Activated naive CD4-positive, alpha-beta T cell treated with anti-CD3 and anti-CD28 coated beads for 36 hours (primary cell): ENCODE measurements at regions of chr10 and their contacts with region 1.

Region 1: GRCh38 chr10:110671788-110672579 is 27.8 kb downstream of the RBM20 start:
- DNase-seq: peak; percentile 76
- H3K4me3 Mint-ChIP-seq: peak overlapping the region; percentile 75
- H3K27ac Mint-ChIP-seq: no peak overlapping the region
- H3K4me1 Mint-ChIP-seq: peaks cover 2% of the 10 kb centered on the region
- H3K27me3 Mint-ChIP-seq: no peaks in the 10 kb centered on the region

Region 2: GRCh38 chr10:110651044-110651958 is 20.7 kb before region 1 on chr10:
- CTCF ChIA-PET with region 1: interaction called, 8 read pairs
- intact Hi-C with region 1: loop called (anchors 2 kb)
- DNase-seq: peak; percentile 44
- H3K4me3 Mint-ChIP-seq: no peak overlapping the region
- H3K27ac Mint-ChIP-seq: no peak overlapping the region
- H3K4me1 Mint-ChIP-seq: peaks cover 9% of the 10 kb centered on the region
- H3K27me3 Mint-ChIP-seq: peaks cover 22% of the 10 kb centered on the region

Region 3: GRCh38 chr10:110657968-110658691 is 13.9 kb before region 1 on chr10:
- CTCF ChIA-PET with region 1: interaction called, 14 read pairs
- intact Hi-C with region 1: no loop called
- DNase-seq: no peak
- H3K4me3 Mint-ChIP-seq: no peak overlapping the region
- H3K27ac Mint-ChIP-seq: no peak overlapping the region
- H3K4me1 Mint-ChIP-seq: peaks cover 5% of the 10 kb centered on the region
- H3K27me3 Mint-ChIP-seq: peaks cover 6% of the 10 kb centered on the region